ENCODE measurements at regions of chr17 and their contacts with region 1.

Region 1: GRCh38 chr17:8189711-8190477 is at the start of gene BORCS6:
- DNase-seq: peak; percentile 93 to 97 (median 95)
- H3K4me3 ChIP-seq: peak within 1 kb of the TSS; percentile 92
- H3K4me3 Mint-ChIP-seq: peak within 1 kb of the TSS in 1 of 7 donors; percentile 15
- H3K27ac ChIP-seq: peak within 1 kb of the TSS; percentile 81
- H3K27ac Mint-ChIP-seq: peak within 1 kb of the TSS; percentile 46 to 95 (median 88)
- H3K4me1 ChIP-seq: peaks cover 39% of the 10 kb centered on the region
- H3K4me1 Mint-ChIP-seq: peaks cover 12 to 13% (median 12%) of the 10 kb centered on the region in 3 donors
- H3K27me3 ChIP-seq: no peaks in the 10 kb centered on the region
- H3K27me3 Mint-ChIP-seq: peaks cover 0 to 2% of the 10 kb centered on the region in 2 donors
- total RNA-seq, gene BORCS6: 8.1 to 8.8 TPM

Region 2: GRCh38 chr17:8156246-8156992 is 33.5 kb before region 1 on chr17:
- CTCF ChIA-PET with region 1: interaction called, 52 read pairs
- POLR2A ChIA-PET with region 1: interaction called, 40 read pairs
- DNase-seq: peak; percentile 100
- H3K4me3 ChIP-seq: peak overlapping the region; percentile 100
- H3K4me3 Mint-ChIP-seq: no peak overlapping the region
- H3K27ac ChIP-seq: peak overlapping the region; percentile 100
- H3K27ac Mint-ChIP-seq: no peak overlapping the region
- H3K4me1 ChIP-seq: peaks cover 77% of the 10 kb centered on the region
- H3K4me1 Mint-ChIP-seq: peaks cover 32 to 73% (median 48%) of the 10 kb centered on the region in 3 donors
- H3K27me3 ChIP-seq: no peaks in the 10 kb centered on the region
- H3K27me3 Mint-ChIP-seq: peaks cover 0 to 14% of the 10 kb centered on the region in 2 donors

Region 3: GRCh38 chr17:8173056-8173870 is 16.6 kb before region 1 on chr17:
- CTCF ChIA-PET with region 1: interaction called, 6 read pairs
- POLR2A ChIA-PET with region 1: interaction called, 20 read pairs
- DNase-seq: peak; percentile 60 to 92 (median 89)
- H3K4me3 ChIP-seq: peak overlapping the region; percentile 57
- H3K4me3 Mint-ChIP-seq: peak overlapping the region; percentile 86 to 95 (median 90)
- H3K27ac ChIP-seq: peak overlapping the region; percentile 98
- H3K27ac Mint-ChIP-seq: peak overlapping the region; percentile 99 to 100 (median 100)
- H3K4me1 ChIP-seq: peaks cover 44% of the 10 kb centered on the region
- H3K4me1 Mint-ChIP-seq: peaks cover 37 to 55% (median 51%) of the 10 kb centered on the region in 3 donors
- H3K27me3 ChIP-seq: no peaks in the 10 kb centered on the region
- H3K27me3 Mint-ChIP-seq: peaks cover 0 to 5% of the 10 kb centered on the region in 2 donors

Region 4: GRCh38 chr17:8209909-8210760 is 20.2 kb after region 1 on chr17 and contains the start of gene AURKB:
- CTCF ChIA-PET with region 1: interaction called, 6 read pairs
- POLR2A ChIA-PET with region 1: interaction called, 13 read pairs
- DNase-seq: peak; percentile 86 to 96 (median 92)
- H3K4me3 ChIP-seq: peak within 1 kb of the TSS; percentile 93
- H3K4me3 Mint-ChIP-seq: peak within 1 kb of the TSS; percentile 83 to 96 (median 89)
- H3K27ac ChIP-seq: peak within 1 kb of the TSS; percentile 61
- H3K27ac Mint-ChIP-seq: peak within 1 kb of the TSS; percentile 53 to 95 (median 92)
- H3K4me1 ChIP-seq: peaks cover 12% of the 10 kb centered on the region
- H3K4me1 Mint-ChIP-seq: peaks cover 15 to 22% (median 17%) of the 10 kb centered on the region in 3 donors
- H3K27me3 ChIP-seq: no peaks in the 10 kb centered on the region
- H3K27me3 Mint-ChIP-seq: peaks cover 0 to 3% of the 10 kb centered on the region in 2 donors
- total RNA-seq, gene AURKB: 88.1 to 94.4 TPM

Region 5: GRCh38 chr17:8248751-8249607 is 59.1 kb after region 1 on chr17 and contains the start of gene PFAS:
- CTCF ChIA-PET with region 1: interaction called, 7 read pairs
- POLR2A ChIA-PET with region 1: interaction called, 25 read pairs
- DNase-seq: peak; percentile 93 to 97 (median 95)
- H3K4me3 ChIP-seq: peak within 1 kb of the TSS; percentile 71
- H3K4me3 Mint-ChIP-seq: peak within 1 kb of the TSS; percentile 95 to 99 (median 99)
- H3K27ac ChIP-seq: peak within 1 kb of the TSS; percentile 100
- H3K27ac Mint-ChIP-seq: peak within 1 kb of the TSS; percentile 98 to 100 (median 100)
- H3K4me1 ChIP-seq: peaks cover 37% of the 10 kb centered on the region
- H3K4me1 Mint-ChIP-seq: peaks cover 45 to 52% (median 52%) of the 10 kb centered on the region in 3 donors
- H3K27me3 ChIP-seq: no peaks in the 10 kb centered on the region
- H3K27me3 Mint-ChIP-seq: peaks cover 0 to 9% of the 10 kb centered on the region in 2 donors
- total RNA-seq, gene PFAS: 167 to 168 TPM

Region 6: GRCh38 chr17:8300627-8301242 is 110.8 kb after region 1 on chr17:
- CTCF ChIA-PET with region 1: interaction called, 11 read pairs
- POLR2A ChIA-PET with region 1: interaction called, 11 read pairs
- DNase-seq: peak; percentile 43 to 79 (median 66)
- H3K4me3 ChIP-seq: no peak overlapping the region
- H3K4me3 Mint-ChIP-seq: peak overlapping the region in 1 of 7 donors; percentile 31
- H3K27ac ChIP-seq: no peak overlapping the region
- H3K27ac Mint-ChIP-seq: peak overlapping the region in 6 of 8 donors; percentile 4 to 86 (median 24)
- H3K4me1 ChIP-seq: peaks cover 10% of the 10 kb centered on the region
- H3K4me1 Mint-ChIP-seq: peaks cover 9 to 12% (median 11%) of the 10 kb centered on the region in 3 donors
- H3K27me3 ChIP-seq: no peaks in the 10 kb centered on the region
- H3K27me3 Mint-ChIP-seq: no peaks in the 10 kb centered on the region